Activated CD4-positive, alpha-beta T cell treated with anti-CD3 and anti-CD28 coated beads for 36 hours (primary cell): ENCODE measurements at regions of chr15 and their contacts with region 1.

Region 1: GRCh38 chr15:43329960-43330779 is at the start of gene LCMT2:
- DNase-seq: peak; percentile 93
- ATAC-seq: peak; percentile 91
- H3K4me3 Mint-ChIP-seq: peak within 1 kb of the TSS; percentile 91
- H3K27ac Mint-ChIP-seq: peak within 1 kb of the TSS; percentile 95
- H3K4me1 Mint-ChIP-seq: peaks cover 32% of the 10 kb centered on the region
- H3K27me3 Mint-ChIP-seq: no peaks in the 10 kb centered on the region
- total RNA-seq, gene LCMT2: 7.6 to 8.5 TPM

Region 2: DNA sequence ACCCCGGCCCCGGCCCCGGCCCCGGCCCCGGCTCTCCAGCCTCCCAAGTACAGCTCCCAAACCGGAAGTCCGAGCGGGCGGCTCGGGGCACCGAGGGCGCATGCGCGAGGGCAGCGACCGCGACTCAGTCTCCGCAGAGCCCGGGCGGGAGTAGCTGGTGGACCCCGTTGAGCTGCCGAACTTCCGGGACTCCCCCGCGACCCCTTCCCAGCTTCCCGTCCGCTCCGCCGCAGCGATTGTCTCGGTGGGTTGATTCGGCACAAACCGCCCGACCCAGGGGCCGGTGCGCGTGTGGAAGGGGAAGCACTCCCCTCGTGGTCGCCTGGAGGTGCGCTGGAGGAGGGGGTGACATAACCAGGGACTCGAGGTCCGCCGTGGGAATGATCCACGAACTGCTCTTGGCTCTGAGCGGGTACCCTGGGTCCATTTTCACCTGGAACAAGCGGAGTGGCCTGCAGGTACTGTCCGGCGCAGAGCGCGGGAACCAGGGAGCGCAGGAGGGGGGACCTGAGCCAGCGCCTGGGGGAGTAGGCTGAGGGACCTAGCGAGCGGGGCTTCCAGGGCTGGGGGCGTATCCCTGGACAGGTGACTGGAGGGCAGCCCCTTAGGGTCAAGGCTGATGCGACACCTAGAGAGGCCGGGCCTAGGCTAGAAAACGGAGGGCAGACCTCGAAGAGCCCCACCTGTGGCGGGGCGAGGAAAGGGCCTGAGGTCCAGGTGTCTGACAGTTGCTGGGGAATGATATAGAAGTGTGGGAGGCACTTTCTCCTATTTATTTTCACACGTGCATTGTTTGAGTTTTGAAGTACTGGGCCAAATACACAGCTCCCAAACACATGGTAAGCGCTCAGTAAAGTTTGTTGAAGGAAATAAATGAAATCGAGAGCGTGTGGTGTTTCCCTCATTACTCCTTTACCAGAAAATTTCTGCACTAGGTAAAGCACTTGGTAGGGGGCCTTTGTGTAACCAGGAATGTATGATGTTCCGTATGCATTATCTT is 41.1 kb after region 1 on chr15 and contains the starts of genes TUBGCP4 and ZSCAN29:
- CTCF ChIA-PET with region 1: interaction called, 3 read pairs
- POLR2A ChIA-PET with region 1: no interaction called
- intact Hi-C with region 1: loop called (anchors 1 kb)
- DNase-seq: peak; percentile 87
- ATAC-seq: peak; percentile 86
- H3K4me3 Mint-ChIP-seq: peak within 1 kb of the TSS; percentile 86
- H3K27ac Mint-ChIP-seq: peak within 1 kb of the TSS; percentile 85
- H3K4me1 Mint-ChIP-seq: peaks cover 46% of the 10 kb centered on the region
- H3K27me3 Mint-ChIP-seq: no peaks in the 10 kb centered on the region
- total RNA-seq, gene TUBGCP4: 43.6 to 44.0 TPM
- total RNA-seq, gene ZSCAN29: 20.8 to 26.4 TPM

Region 3: GRCh38 chr15:43440721-43441281 is 110.6 kb after region 1 on chr15:
- CTCF ChIA-PET with region 1: no interaction called
- POLR2A ChIA-PET with region 1: no interaction called
- intact Hi-C with region 1: no loop called
- DNase-seq: peak; percentile 64
- ATAC-seq: peak; percentile 95
- H3K4me3 Mint-ChIP-seq: no peak overlapping the region
- H3K27ac Mint-ChIP-seq: peak overlapping the region; percentile 91
- H3K4me1 Mint-ChIP-seq: peaks cover 7% of the 10 kb centered on the region
- H3K27me3 Mint-ChIP-seq: no peaks in the 10 kb centered on the region

Region 4: GRCh38 chr15:43492673-43493601 is 162.8 kb after region 1 on chr15 and contains the start of gene TP53BP1:
- CTCF ChIA-PET with region 1: no interaction called
- POLR2A ChIA-PET with region 1: no interaction called
- intact Hi-C with region 1: loop called in 1 of 2 experiments (anchors 1 kb)
- DNase-seq: peak; percentile 98
- ATAC-seq: peak; percentile 100
- H3K4me3 Mint-ChIP-seq: peak within 1 kb of the TSS; percentile 81
- H3K27ac Mint-ChIP-seq: peak within 1 kb of the TSS; percentile 93
- H3K4me1 Mint-ChIP-seq: peaks cover 30% of the 10 kb centered on the region
- H3K27me3 Mint-ChIP-seq: no peaks in the 10 kb centered on the region
- total RNA-seq, gene TP53BP1: 22.4 to 23.9 TPM

Region 5: DNA sequence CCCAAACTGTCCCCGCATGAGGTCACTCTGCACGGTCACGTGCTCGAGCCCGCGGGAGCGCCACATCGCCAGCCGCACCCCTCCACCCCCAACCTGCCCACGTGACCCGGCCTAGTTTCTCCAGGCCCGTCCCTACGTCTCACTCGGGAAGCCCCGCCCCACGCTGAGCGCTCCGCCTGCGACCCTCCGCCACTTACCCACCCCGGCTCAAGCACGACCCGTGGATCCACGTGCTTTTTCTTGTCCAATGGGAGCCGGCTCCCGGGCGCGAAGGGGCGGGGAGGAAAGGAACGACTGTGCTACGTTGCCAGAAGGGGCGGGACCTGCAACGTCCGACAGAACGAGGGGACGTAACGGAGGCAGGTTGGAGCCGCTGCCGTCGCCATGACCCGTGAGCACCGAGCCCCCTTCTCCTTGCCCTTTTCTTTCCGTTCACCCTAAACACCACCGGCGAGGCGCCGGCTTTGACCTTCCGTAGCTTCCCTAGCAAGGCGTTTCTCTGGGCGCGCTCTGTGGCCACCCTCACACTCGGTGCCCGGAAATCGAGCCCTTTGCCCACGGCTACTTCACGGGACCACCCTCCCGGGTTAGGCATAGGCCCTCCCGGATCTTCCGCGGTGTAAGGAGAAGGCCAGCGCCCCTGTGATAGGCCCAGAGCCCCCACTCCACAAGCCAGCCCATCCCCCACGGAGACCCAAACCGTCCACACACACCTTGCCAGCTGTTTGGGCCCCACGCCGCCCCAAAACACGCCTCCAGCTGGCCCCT is 462.0 kb after region 1 on chr15 and contains the start of gene SERF2:
- CTCF ChIA-PET with region 1: no interaction called
- POLR2A ChIA-PET with region 1: no interaction called
- intact Hi-C with region 1: loop called in 1 of 2 experiments (anchors 1 kb)
- DNase-seq: peak; percentile 100
- ATAC-seq: peak; percentile 98
- H3K4me3 Mint-ChIP-seq: peak within 1 kb of the TSS; percentile 97
- H3K27ac Mint-ChIP-seq: peak within 1 kb of the TSS; percentile 97
- H3K4me1 Mint-ChIP-seq: peaks cover 35% of the 10 kb centered on the region
- H3K27me3 Mint-ChIP-seq: no peaks in the 10 kb centered on the region
- total RNA-seq, gene SERF2: 710 to 718 TPM

Region 6: GRCh38 chr15:43800286-43801141 is 470.3 kb after region 1 on chr15 and contains the start of gene HYPK:
- CTCF ChIA-PET with region 1: no interaction called
- POLR2A ChIA-PET with region 1: no interaction called
- intact Hi-C with region 1: loop called in 1 of 2 experiments (anchors 2 kb)
- DNase-seq: peak; percentile 95
- ATAC-seq: peak; percentile 97
- H3K4me3 Mint-ChIP-seq: peak within 1 kb of the TSS; percentile 85
- H3K27ac Mint-ChIP-seq: peak within 1 kb of the TSS; percentile 98
- H3K4me1 Mint-ChIP-seq: peaks cover 43% of the 10 kb centered on the region
- H3K27me3 Mint-ChIP-seq: no peaks in the 10 kb centered on the region
- total RNA-seq, gene HYPK: 14.0 to 16.4 TPM